Activated CD4-positive, alpha-beta memory T cell treated with anti-CD3 and anti-CD28 coated beads for 36 hours (primary cell): ENCODE measurements at regions of chr6 and their contacts with region 1.

Region 1: GRCh38 chr6:16670183-16670582 is 91.1 kb downstream of the ATXN1 start:
- DNase-seq: no peak
- H3K4me3 Mint-ChIP-seq: peak overlapping the region; percentile 33
- H3K27ac Mint-ChIP-seq: peak overlapping the region; percentile 87
- H3K4me1 Mint-ChIP-seq: peaks cover 81% of the 10 kb centered on the region
- H3K27me3 Mint-ChIP-seq: no peaks in the 10 kb centered on the region

Region 2: GRCh38 chr6:16635810-16636602 is 34.2 kb before region 1 on chr6:
- CTCF ChIA-PET with region 1: no interaction called
- POLR2A ChIA-PET with region 1: no interaction called
- intact Hi-C with region 1: no loop called
- DNase-seq: peak; percentile 30
- H3K4me3 Mint-ChIP-seq: no peak overlapping the region
- H3K27ac Mint-ChIP-seq: no peak overlapping the region
- H3K4me1 Mint-ChIP-seq: peaks cover 54% of the 10 kb centered on the region
- H3K27me3 Mint-ChIP-seq: no peaks in the 10 kb centered on the region

Region 3: GRCh38 chr6:16684896-16685554 is 14.8 kb after region 1 on chr6:
- CTCF ChIA-PET with region 1: interaction called, 6 read pairs
- POLR2A ChIA-PET with region 1: interaction called, 7 read pairs
- intact Hi-C with region 1: loop called (anchors 1 kb)
- DNase-seq: peak; percentile 94
- H3K4me3 Mint-ChIP-seq: peak overlapping the region; percentile 52
- H3K27ac Mint-ChIP-seq: peak overlapping the region; percentile 79
- H3K4me1 Mint-ChIP-seq: peaks cover 91% of the 10 kb centered on the region
- H3K27me3 Mint-ChIP-seq: no peaks in the 10 kb centered on the region